ENCODE measurements at regions of chr17 and their contacts with region 1.

Region 1: DNA sequence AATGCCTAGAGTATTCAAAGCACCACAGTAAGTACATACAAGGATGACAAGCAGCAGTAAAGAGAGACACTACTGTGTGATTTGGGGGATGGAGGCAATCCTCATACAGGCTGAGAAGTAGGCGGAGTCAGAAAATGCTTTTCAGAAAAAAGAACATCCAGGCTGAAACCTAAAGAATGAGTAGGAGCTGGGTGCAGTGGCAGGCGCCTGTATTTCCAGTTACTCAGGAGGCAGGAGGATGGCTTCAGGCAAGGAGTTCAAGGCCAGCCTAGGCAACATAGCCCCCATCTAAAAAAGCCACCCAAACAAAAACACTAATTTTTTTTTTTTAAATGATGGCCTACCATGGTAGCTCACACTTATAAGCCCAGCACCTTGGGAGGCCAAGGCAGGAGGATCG is 10.3 kb downstream of the KANSL1 start:
- DNase-seq: no peak
- ATAC-seq: no peak
- H3K4me3 ChIP-seq: no peak overlapping the region
- H3K27ac ChIP-seq: no peak overlapping the region
- H3K4me1 ChIP-seq: peaks cover 77% of the 10 kb centered on the region
- H3K27me3 ChIP-seq: no peaks in the 10 kb centered on the region
- CTCF ChIP-seq: no peak
- POLR2A ChIP-seq: no peak

Region 2: DNA sequence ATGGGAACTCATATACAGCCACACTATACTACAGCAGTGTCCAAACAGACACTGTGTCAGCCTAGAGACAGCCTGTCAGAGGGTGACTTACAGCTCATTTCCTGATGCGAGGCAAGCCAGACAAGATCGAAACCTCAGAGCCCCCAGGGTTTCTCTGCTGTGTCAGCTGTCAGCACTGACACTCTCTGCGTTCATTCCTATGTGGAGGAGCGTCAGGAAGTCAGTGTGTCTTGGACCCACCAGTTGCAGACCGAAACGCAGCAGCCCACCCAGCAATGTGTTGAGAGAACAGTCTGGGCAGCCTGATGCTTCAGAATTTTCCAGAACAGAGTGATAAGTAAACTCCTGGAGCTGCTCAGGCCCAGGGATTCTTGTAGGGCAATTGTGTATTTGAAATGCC is 309.2 kb before region 1 on chr17:
- intact Hi-C with region 1: no loop called
- DNase-seq: no peak
- ATAC-seq: no peak
- H3K4me3 ChIP-seq: no peak overlapping the region
- H3K27ac ChIP-seq: no peak overlapping the region
- H3K4me1 ChIP-seq: no peaks in the 10 kb centered on the region
- H3K27me3 ChIP-seq: peaks cover 0 to 4% of the 10 kb centered on the region in 2 donors
- CTCF ChIP-seq: no peak
- POLR2A ChIP-seq: no peak

Region 3: GRCh38 chr17:46056800-46057304 is 126.1 kb before region 1 on chr17:
- intact Hi-C with region 1: loop called (anchors 10 kb)
- DNase-seq: no peak
- ATAC-seq: no peak
- H3K4me3 ChIP-seq: no peak overlapping the region
- H3K27ac ChIP-seq: peak overlapping the region in 2 of 4 donors; percentile 62 to 68
- H3K4me1 ChIP-seq: peaks cover 55% of the 10 kb centered on the region
- H3K27me3 ChIP-seq: no peaks in the 10 kb centered on the region
- CTCF ChIP-seq: no peak
- POLR2A ChIP-seq: no peak

Region 4: DNA sequence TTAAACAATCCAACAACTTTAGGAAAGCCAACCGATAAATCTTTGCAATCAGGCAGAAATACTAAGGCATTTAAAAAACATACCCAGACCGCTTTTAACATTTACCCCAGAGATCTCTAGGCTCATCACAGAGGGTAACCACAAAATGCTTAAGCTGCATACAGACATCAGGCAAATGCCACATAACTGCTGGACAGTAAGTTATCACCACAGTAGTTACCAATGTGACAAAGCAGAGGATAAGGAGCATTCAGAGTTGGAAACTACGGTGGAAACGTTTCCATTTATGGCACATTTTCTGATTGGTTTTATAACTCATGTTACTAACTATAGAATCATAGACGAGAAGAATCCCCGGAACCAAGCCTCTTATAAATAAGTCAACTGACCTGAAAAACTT is 67.3 kb before region 1 on chr17:
- intact Hi-C with region 1: loop called (anchors 10 kb)
- DNase-seq: no peak
- ATAC-seq: no peak
- H3K4me3 ChIP-seq: no peak overlapping the region
- H3K27ac ChIP-seq: no peak overlapping the region
- H3K4me1 ChIP-seq: peaks cover 62% of the 10 kb centered on the region
- H3K27me3 ChIP-seq: no peaks in the 10 kb centered on the region
- CTCF ChIP-seq: no peak
- POLR2A ChIP-seq: no peak

Measured in body of pancreas (tissue), 4 donors.